Panc1 (cell line): ENCODE measurements at regions of chr15 and their contacts with region 1.

Region 1: DNA sequence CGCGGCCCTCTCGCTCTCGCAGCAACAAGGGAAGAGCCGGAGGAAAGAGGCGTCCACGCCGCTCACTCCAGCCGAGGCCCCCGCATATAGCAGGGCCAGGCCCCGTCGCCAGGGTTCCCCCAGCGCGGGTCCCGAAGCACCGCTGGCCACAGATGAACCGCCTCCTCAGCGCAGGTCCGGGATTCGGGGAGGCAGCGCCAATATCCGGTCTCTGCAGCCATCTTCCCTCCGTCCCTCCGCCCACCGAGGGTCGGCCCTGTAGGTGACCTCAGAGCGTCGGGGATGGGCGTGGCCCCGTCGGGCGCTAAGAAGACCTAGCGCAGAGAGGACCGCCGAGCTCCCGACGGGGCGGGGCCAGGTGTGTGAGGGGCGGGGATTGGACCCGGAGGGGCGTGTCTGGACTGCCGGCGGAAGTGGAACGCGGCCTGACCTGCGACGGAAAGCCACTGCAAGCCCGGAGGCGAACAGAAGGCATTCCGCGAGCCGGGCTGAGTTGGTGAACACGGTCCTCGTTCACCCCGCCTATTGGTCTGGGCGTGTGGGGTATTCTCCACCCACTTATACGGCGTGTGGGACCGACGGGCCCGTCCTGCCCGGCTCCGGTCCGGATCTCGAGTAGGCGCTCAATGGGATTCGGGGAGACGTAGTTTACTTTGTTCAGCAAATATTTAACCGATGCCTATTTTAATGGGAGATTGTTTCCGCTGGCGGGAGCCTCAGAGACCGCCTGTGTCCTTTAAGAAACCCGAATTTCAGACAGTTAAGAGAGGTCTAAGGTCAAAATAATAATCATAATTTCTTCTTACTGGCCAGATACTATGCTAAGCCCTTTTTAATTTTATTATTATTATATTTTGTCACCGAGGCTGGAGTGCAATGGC is 26.9 kb upstream of the MTHFS start:
- DNase-seq: peak; percentile 92
- ATAC-seq: peak; percentile 97
- H3K4me3 ChIP-seq: peak overlapping the region; percentile 97
- H3K27ac ChIP-seq: peak overlapping the region; percentile 92
- H3K4me1 ChIP-seq: 0 out of 2 replicates have a peak, but pooled peaks cover 3% of the 10 kb centered on the region
- H3K27me3 ChIP-seq: no peaks in the 10 kb centered on the region
- CTCF ChIP-seq: no peak

Region 2: DNA sequence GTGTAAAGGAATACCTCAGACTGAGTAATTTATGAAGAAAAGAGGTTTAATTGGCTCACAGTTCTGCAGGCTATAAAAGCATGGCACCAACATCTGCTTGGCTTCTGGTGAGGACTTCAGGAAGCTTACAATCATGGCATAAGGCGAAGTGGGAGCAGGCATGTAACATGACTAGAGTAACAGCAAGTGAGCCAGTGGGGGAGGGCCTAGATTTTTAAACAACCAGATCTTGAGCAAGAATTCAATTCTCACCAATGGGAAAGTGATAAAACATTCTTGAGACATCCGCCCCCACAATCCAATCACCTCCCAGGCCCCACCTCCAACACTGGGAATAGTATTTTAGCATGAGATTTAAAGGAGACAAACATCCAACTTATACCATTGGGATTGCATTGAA is 91.4 kb after region 1 on chr15:
- CTCF ChIA-PET with region 1: no interaction called
- POLR2A ChIA-PET with region 1: interaction called, 17 read pairs
- in situ Hi-C with region 1: no loop called
- intact Hi-C with region 1: no loop called
- DNase-seq: no peak
- ATAC-seq: no peak
- H3K4me3 ChIP-seq: no peak overlapping the region
- H3K27ac ChIP-seq: no peak overlapping the region
- H3K4me1 ChIP-seq: no peaks in the 10 kb centered on the region
- H3K27me3 ChIP-seq: no peaks in the 10 kb centered on the region
- CTCF ChIP-seq: no peak